GM10248 (cell line): ENCODE measurements at regions of chr6 and their contacts with region 1.

Region 1: DNA sequence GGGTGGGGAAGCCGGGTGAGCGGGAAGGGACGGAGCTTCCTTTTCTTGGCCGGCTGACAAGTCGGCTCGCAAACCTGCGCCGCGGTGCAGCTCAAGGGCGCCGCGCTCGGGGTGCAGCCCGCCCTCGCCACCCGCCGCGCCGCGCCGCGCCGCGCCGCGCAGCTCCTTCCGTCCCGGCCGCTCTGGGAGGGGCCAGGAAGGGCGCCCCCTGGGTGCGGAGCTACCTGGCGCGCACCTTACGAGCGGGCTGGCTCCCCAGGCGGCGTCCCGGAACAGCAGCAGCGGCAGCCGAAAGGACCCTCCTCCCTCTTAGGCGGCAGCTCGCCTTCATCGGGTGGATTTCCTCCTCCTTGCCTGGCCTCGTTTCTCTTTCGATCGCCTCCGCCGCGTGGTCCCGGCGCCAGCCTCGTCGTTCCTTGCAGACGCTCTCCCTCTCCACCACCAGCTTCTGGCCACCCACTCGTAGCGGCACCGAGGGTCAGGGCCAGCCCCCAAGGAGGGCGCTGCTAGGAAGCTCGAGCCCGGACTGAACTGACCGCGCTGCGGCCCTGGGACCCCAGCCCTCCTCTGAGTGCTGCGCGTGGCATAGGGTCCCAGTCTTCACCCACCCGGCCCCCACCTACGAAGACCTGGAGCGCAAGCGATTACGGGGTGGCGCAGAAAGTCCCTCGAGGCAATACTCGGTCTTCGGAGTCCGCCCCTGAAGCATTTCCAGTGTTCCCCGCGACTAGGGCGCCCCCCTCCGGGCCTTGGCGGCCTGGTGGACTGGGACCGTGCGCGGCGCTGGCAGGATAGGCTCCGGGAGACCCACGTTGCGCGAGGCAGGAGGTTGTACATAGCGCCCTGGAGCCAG is at the start of gene MAP3K5:
- DNase-seq: peak; percentile 80
- CTCF ChIP-seq: peak; percentile 93

Region 2: DNA sequence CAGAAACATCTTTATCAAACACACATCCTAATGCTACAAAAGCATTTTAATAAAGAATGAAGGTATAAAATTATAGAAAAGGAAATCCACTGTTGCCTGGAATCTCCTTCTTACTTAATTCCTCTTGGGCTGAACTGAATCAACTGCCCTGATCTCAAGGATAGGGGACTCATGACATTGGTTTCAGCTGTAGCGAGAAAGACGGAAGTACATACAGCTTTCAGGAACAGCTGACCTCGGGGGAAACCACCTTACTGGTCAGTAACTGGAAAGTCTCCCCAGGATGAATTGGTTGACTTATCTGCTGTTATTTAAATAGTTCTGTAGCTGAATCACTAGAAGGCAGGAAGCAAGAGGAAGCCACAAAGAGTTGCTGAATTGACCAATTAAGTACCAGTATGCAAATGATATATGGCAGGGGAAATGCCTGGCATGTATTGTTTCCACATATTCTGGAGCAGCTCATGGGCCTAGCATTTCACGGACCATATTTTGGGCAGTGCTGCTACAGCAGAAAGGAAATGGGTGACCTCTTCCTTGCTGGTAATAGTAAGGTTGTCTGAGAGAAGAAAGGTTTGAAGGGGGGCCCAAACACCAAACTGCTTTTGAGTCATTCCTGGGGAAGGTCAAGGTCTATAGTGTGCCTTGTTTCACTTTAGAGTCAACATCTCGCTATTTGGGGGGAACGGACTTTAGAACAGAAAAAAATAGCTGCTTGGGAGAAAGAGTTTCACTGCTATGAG is 198.7 kb before region 1 on chr6:
- CTCF ChIA-PET with region 1: interaction called, 10 read pairs
- POLR2A ChIA-PET with region 1: no interaction called
- DNase-seq: peak; percentile 79
- CTCF ChIP-seq: no peak

Region 3: GRCh38 chr6:136643850-136644596 is 148.6 kb before region 1 on chr6:
- CTCF ChIA-PET with region 1: interaction called, 348 read pairs
- POLR2A ChIA-PET with region 1: interaction called, 13 read pairs
- DNase-seq: peak; percentile 56
- CTCF ChIP-seq: peak; percentile 80

Region 4: DNA sequence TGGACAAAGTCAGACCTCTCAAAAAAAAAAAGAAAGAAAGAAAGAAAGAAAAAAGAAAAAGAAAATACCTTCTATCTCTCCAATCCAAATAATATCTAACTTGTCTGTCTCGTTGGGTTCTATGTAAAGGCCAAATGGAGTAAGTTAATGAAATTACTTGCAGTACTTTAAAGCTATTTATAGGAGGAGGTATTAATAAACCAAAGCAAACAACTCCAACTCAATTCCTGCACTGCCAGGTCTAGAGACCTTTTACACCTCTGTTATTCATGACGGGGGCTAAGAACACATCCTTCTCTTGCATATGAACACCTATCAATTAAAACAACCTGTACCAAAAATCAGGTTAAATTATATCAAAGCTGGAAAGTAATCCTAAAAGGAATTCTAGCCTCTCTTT is 81.0 kb before region 1 on chr6:
- CTCF ChIA-PET with region 1: interaction called, 54 read pairs
- POLR2A ChIA-PET with region 1: interaction called, 6 read pairs
- DNase-seq: no peak
- CTCF ChIP-seq: no peak

Region 5: DNA sequence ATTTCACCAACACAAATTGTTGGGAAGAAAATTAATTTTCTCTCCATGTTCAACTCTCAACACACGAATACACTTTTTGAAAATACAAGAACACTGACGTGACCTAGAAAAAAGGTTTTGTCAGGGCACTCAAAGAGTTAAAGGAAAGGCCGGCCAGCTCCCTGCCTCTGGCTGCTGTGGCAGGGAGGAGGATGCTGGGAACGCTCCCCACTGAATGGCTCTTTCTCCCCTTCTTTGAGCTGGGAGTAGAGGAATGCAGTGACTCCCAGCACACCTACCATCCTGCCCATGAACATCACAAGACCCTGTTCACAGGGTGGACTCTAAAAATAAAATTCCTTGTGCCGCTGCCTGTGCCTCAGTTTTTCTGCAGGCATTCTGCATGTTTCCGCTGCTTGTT is 47.3 kb before region 1 on chr6:
- CTCF ChIA-PET with region 1: interaction called, 20 read pairs
- POLR2A ChIA-PET with region 1: no interaction called
- DNase-seq: no peak
- CTCF ChIP-seq: no peak

Region 6: GRCh38 chr6:136822376-136823127 is 29.9 kb after region 1 on chr6 and contains the start of gene PEX7:
- CTCF ChIA-PET with region 1: interaction called, 17 read pairs
- POLR2A ChIA-PET with region 1: no interaction called
- DNase-seq: peak; percentile 91
- CTCF ChIP-seq: peak; percentile 79

Region 7: GRCh38 chr6:137112067-137112355 is 319.4 kb after region 1 on chr6:
- CTCF ChIA-PET with region 1: no interaction called
- POLR2A ChIA-PET with region 1: no interaction called
- DNase-seq: no peak
- CTCF ChIP-seq: no peak